Left ventricle myocardium inferior (tissue), 1 donor: ENCODE measurements at regions of chr2 and their contacts with region 1.

Region 1: DNA sequence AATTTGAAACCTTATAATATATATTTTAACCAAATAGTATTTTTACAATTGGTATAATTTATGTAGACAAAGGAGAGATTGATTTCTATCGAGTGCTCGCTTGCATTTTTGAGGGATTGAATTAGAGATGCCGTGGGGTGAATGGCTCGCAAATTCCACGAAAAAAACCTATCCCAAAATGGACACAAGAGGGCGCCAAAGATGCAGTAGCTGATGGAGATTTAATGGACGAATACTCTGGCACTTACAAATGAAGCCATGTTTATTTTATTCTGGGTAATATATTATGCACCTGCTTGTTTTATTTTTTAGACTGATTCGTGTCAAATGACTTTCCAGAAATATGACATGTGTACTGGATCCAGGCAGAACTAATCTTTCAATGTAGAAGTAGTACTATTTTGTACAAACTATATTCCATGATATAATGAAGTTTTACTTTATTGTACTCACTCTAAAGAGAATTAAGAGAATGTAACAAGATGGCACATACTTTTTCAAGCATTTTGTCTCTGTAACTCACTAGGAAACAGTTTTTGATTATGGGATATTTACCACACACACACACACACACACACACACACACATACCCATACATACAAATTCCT is 505.4 kb downstream of the PLCL1 start:
- DNase-seq: no peak
- H3K4me3 ChIP-seq: no peak overlapping the region
- H3K27ac ChIP-seq: no peak overlapping the region
- H3K4me1 ChIP-seq: no peaks in the 10 kb centered on the region
- H3K27me3 ChIP-seq: peaks cover 50% of the 10 kb centered on the region
- CTCF ChIP-seq: peak; percentile 89

Region 2: GRCh38 chr2:199488772-199489400 is 1179.1 kb after region 1 on chr2:
- intact Hi-C with region 1: loop called (anchors 10 kb)
- DNase-seq: no peak
- H3K4me3 ChIP-seq: no peak overlapping the region
- H3K27ac ChIP-seq: no peak overlapping the region
- H3K4me1 ChIP-seq: no peaks in the 10 kb centered on the region
- H3K27me3 ChIP-seq: peaks cover 81% of the 10 kb centered on the region
- CTCF ChIP-seq: peak; percentile 68